Activated CD4-positive, alpha-beta memory T cell treated with anti-CD3 and anti-CD28 coated beads for 36 hours (primary cell): ENCODE measurements at regions of chr6 and their contacts with region 1.

Region 1: GRCh38 chr6:27479319-27480182 is 6.6 kb upstream of the ZNF184 start:
- DNase-seq: peak; percentile 89
- H3K4me3 Mint-ChIP-seq: no peak overlapping the region
- H3K27ac Mint-ChIP-seq: no peak overlapping the region
- H3K4me1 Mint-ChIP-seq: peaks cover 5% of the 10 kb centered on the region
- H3K27me3 Mint-ChIP-seq: no peaks in the 10 kb centered on the region

Region 2: DNA sequence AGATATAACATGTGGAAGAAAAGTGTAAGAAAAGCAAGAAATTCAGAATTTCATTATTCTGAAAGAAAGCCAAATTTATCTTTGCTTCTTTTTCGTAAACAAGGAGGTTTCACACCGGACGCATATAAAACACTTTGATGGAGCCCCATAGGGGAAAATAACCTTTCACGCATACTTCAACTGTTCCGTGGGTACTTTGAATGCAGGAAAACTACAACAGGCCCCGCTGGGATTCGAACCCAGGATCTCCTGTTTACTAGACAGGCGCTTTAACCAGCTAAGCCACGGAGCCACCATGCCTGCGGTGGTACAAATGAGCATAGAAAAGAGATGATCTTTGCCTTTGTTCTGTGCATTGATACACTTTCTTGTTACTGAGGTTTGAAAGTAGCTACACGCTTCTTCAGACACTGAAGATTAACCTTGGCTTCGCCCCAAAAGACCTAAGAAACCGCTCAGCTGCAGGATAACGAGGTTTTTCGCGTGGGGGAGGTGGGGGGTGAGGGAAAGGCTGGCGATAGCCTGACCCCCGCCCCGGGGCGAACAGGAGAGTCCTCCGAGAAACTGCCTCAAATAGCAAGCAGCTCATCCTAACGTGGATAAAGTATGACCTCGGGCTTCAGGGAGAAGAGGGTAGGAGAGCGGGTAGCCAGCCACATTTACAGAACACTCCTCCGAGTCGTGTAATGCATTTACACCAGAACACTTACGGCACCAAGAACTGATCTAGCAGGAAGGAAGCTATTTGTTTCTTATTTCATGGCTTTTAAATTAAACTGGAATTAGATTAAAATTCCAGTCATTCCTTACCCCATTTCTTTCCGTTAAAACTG is 946.6 kb before region 1 on chr6:
- CTCF ChIA-PET with region 1: no interaction called
- POLR2A ChIA-PET with region 1: no interaction called
- intact Hi-C with region 1: loop called (anchors 5 kb)
- DNase-seq: peak; percentile 95
- H3K4me3 Mint-ChIP-seq: peak overlapping the region; percentile 92
- H3K27ac Mint-ChIP-seq: peak overlapping the region; percentile 92
- H3K4me1 Mint-ChIP-seq: peaks cover 44% of the 10 kb centered on the region
- H3K27me3 Mint-ChIP-seq: peaks cover 2% of the 10 kb centered on the region

Region 3: GRCh38 chr6:27251606-27252251 is 227.8 kb before region 1 on chr6:
- CTCF ChIA-PET with region 1: no interaction called
- POLR2A ChIA-PET with region 1: no interaction called
- intact Hi-C with region 1: loop called (anchors 5 kb)
- DNase-seq: peak; percentile 88
- H3K4me3 Mint-ChIP-seq: peak overlapping the region; percentile 79
- H3K27ac Mint-ChIP-seq: peak overlapping the region; percentile 28
- H3K4me1 Mint-ChIP-seq: peaks cover 11% of the 10 kb centered on the region
- H3K27me3 Mint-ChIP-seq: peaks cover 45% of the 10 kb centered on the region

Region 4: DNA sequence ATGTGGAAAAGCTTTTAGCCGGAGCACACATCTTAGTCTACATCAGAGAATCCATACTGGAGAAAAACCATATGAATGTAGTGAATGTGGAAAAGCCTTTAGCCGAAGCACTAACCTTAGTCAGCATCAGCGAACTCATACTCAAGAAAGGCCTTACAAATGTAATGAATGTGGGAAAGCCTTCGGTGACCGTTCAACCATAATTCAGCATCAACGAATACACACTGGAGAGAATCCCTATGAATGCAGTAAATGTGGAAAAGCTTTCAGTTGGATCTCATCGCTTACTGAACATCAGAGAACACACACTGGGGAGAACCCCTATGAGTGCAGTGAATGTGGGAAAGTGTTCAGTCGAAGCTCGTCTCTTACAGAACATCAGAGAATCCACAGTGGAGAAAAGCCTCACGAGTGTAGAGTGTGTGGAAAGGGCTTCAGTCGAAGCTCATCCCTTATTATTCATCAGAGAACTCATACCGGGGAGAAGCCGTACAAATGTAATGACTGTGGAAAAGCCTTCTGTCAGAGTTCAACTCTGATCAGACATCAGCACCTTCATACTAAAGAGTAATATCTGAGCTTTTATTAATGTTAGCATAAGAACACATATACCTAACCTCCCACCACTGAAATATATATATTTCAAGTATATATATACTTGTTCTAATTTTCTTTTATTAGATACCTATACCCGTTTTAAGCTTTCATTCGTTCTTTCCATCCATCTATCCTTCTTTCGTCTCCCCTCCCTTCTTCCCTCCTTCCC is 78.5 kb before region 1 on chr6:
- CTCF ChIA-PET with region 1: no interaction called
- POLR2A ChIA-PET with region 1: no interaction called
- intact Hi-C with region 1: no loop called
- DNase-seq: no peak
- H3K4me3 Mint-ChIP-seq: no peak overlapping the region
- H3K27ac Mint-ChIP-seq: no peak overlapping the region
- H3K4me1 Mint-ChIP-seq: no peaks in the 10 kb centered on the region
- H3K27me3 Mint-ChIP-seq: no peaks in the 10 kb centered on the region

Region 5: DNA sequence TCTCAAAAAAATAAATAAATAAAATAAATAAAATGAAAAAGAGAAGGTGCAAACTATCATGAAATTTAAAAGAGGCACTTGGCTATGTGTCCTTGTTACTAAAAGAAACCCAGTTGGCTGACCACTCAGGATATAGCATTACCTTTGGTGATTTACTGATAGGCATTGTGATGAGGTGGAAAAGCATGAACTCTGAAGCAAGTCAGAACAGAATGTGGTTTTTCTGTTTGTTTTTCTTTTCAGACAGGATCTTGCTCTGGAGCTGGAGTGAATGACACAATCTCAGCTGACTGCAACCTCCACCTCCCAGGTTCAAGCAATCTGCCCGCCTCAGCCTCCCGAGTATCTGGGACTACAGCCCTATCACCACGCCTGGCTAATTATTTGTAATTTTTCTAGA is 38.5 kb before region 1 on chr6:
- CTCF ChIA-PET with region 1: no interaction called
- POLR2A ChIA-PET with region 1: no interaction called
- intact Hi-C with region 1: no loop called
- DNase-seq: no peak
- H3K4me3 Mint-ChIP-seq: no peak overlapping the region
- H3K27ac Mint-ChIP-seq: no peak overlapping the region
- H3K4me1 Mint-ChIP-seq: no peaks in the 10 kb centered on the region
- H3K27me3 Mint-ChIP-seq: no peaks in the 10 kb centered on the region

Region 6: DNA sequence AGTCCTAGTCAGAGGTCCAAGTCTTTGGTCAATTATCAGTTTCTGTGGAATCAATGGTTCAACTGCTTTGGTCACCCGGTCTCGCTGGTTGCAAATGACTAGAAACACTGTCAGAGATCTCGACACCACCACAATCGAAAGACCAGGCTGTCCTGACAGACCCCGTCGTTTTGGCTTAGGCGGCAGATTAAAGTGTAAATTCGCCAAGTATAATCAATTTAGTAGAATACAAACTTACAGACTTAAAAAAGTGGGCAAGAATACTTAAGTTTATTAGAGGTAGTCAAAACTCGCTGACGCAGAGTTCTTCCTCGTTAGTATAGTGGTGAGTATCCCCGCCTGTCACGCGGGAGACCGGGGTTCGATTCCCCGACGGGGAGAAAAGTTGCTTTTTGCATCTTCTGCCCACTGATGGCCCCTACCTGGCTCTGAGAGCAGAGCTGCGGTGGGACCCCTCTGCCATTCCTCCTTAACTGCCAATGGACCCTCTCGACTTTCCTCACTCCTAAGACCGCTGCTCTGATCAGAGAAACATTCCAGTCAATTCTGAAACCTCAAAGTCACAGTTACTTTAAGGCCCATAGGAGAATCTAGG is 24.0 kb after region 1 on chr6:
- CTCF ChIA-PET with region 1: interaction called, 3 read pairs
- POLR2A ChIA-PET with region 1: interaction called, 10 read pairs
- intact Hi-C with region 1: loop called (anchors 1 kb)
- DNase-seq: peak; percentile 86
- H3K4me3 Mint-ChIP-seq: peak overlapping the region; percentile 88
- H3K27ac Mint-ChIP-seq: peak overlapping the region; percentile 85
- H3K4me1 Mint-ChIP-seq: peaks cover 26% of the 10 kb centered on the region
- H3K27me3 Mint-ChIP-seq: peaks cover 10% of the 10 kb centered on the region

Region 7: DNA sequence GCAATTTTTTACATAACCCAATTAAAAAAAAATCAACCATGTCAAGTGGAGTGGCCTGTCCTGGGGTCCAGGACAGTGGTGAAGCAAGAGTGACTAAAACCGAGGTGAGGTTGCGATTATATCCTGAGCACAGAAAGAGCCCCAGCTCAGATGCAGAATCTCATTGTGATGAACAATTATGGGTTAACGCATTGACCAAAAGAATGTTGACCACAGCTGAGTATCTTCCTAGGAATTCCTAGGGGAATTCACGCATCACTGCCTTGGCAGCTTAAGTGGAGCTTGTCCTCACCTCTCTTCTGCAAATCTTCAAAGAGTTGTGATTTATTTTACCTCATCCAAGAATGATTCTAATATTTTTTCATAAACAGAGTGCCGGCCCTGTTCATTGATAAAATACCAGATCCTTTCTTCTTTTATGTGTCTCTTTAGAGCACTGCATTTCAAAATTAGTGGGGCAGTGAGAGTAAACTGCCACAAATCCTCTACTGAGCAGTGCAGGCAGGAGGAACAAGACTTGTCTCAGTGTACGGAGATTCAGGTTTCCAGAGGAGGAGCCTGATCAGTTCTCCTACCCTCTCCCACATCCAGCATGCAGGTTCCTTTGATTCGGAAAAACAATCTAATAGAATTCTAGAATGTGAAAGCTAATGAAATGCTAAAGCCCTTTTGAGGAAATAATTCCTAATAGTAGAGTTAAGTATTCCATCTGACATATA is 53.4 kb after region 1 on chr6:
- CTCF ChIA-PET with region 1: no interaction called
- POLR2A ChIA-PET with region 1: no interaction called
- intact Hi-C with region 1: no loop called
- DNase-seq: no peak
- H3K4me3 Mint-ChIP-seq: no peak overlapping the region
- H3K27ac Mint-ChIP-seq: no peak overlapping the region
- H3K4me1 Mint-ChIP-seq: no peaks in the 10 kb centered on the region
- H3K27me3 Mint-ChIP-seq: peaks cover 48% of the 10 kb centered on the region

Region 8: DNA sequence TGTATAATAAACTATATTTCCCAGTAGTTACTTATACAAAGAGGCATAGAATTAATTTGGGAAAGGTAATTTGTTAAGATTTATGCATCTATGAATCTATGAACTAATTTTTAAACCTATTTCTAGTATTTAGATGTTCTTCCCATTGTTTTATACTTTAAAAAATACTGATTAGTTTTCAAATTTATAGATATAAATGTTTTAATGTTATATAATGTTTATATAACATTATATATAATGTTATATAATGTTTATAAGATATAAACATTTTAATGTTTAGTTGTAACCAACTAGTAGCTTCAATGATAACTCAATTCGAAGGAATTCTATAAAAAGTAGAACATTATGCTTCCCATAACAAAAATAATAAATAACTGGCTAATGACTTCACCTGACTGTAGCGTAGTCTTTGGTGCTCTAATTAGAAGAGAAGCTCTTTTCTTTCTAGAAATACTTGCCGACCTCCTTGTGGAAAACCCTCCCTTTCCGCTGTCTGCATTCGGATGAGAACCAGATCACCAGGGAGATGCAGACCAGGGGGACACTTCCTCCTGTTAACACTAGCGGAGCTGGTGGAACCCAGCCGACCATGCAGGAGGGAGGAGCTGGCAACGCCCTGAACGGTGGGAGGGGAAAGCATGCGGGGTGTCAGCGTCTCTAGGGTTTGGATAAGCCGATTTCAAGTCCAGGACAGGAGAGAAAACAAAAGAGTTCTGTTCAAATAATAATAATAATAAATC is 274.3 kb after region 1 on chr6:
- CTCF ChIA-PET with region 1: interaction called, 3 read pairs
- POLR2A ChIA-PET with region 1: no interaction called
- intact Hi-C with region 1: loop called (anchors 1 kb)
- DNase-seq: peak; percentile 87
- H3K4me3 Mint-ChIP-seq: peak overlapping the region; percentile 83
- H3K27ac Mint-ChIP-seq: peak overlapping the region; percentile 69
- H3K4me1 Mint-ChIP-seq: peaks cover 33% of the 10 kb centered on the region
- H3K27me3 Mint-ChIP-seq: peaks cover 3% of the 10 kb centered on the region

Region 9: GRCh38 chr6:27902335-27903314 is 423.1 kb after region 1 on chr6:
- CTCF ChIA-PET with region 1: interaction called, 3 read pairs
- POLR2A ChIA-PET with region 1: no interaction called
- intact Hi-C with region 1: loop called (anchors 1 kb)
- DNase-seq: peak; percentile 92
- H3K4me3 Mint-ChIP-seq: peak overlapping the region; percentile 79
- H3K27ac Mint-ChIP-seq: peak overlapping the region; percentile 91
- H3K4me1 Mint-ChIP-seq: peaks cover 11% of the 10 kb centered on the region
- H3K27me3 Mint-ChIP-seq: peaks cover 13% of the 10 kb centered on the region